Activated B cell treated with CpG ODN at 0.5 μM for 24 hours (primary cell): ENCODE measurements at regions of chr17 and their contacts with region 1.

Region 1: GRCh38 chr17:2266045-2266864 is 37.3 kb downstream of the SMG6 start:
- DNase-seq: peak; percentile 16
- ATAC-seq: peak; percentile 87
- H3K4me3 Mint-ChIP-seq: peak overlapping the region; percentile 70
- H3K27ac Mint-ChIP-seq: peak overlapping the region; percentile 93
- H3K4me1 Mint-ChIP-seq: peaks cover 20% of the 10 kb centered on the region
- H3K27me3 Mint-ChIP-seq: no peaks in the 10 kb centered on the region
- CTCF ChIP-seq: no peak

Region 2: GRCh38 chr17:2302778-2303203 is 36.5 kb after region 1 on chr17:
- CTCF ChIA-PET with region 1: no interaction called
- POLR2A ChIA-PET with region 1: no interaction called
- intact Hi-C with region 1: no loop called
- DNase-seq: no peak
- ATAC-seq: no peak
- H3K4me3 Mint-ChIP-seq: peak overlapping the region; percentile 88
- H3K27ac Mint-ChIP-seq: peak overlapping the region; percentile 65
- H3K4me1 Mint-ChIP-seq: peaks cover 14% of the 10 kb centered on the region
- H3K27me3 Mint-ChIP-seq: no peaks in the 10 kb centered on the region
- CTCF ChIP-seq: no peak

Region 3: GRCh38 chr17:2532146-2532720 is 266.0 kb after region 1 on chr17:
- CTCF ChIA-PET with region 1: no interaction called
- POLR2A ChIA-PET with region 1: interaction called, 15 read pairs
- intact Hi-C with region 1: no loop called
- DNase-seq: no peak
- ATAC-seq: no peak
- H3K4me3 Mint-ChIP-seq: no peak overlapping the region
- H3K27ac Mint-ChIP-seq: no peak overlapping the region
- H3K4me1 Mint-ChIP-seq: peaks cover 7% of the 10 kb centered on the region
- H3K27me3 Mint-ChIP-seq: no peaks in the 10 kb centered on the region
- CTCF ChIP-seq: no peak